ENCODE measurements at regions of chr7 and their contacts with region 1.

Region 1: GRCh38 chr7:143408686-143409561 is at the start of gene EPHA1:
- DNase-seq: peak; percentile 86 to 88
- H3K4me3 ChIP-seq: peak within 1 kb of the TSS; percentile 59
- H3K4me3 Mint-ChIP-seq: peak within 1 kb of the TSS; percentile 86
- H3K27ac Mint-ChIP-seq: peak within 1 kb of the TSS; percentile 86
- H3K4me1 ChIP-seq: peaks cover 49% of the 10 kb centered on the region
- H3K4me1 Mint-ChIP-seq: peaks cover 68% of the 10 kb centered on the region
- H3K27me3 ChIP-seq: no peaks in the 10 kb centered on the region
- H3K27me3 Mint-ChIP-seq: no peaks in the 10 kb centered on the region
- CTCF ChIP-seq: peak; percentile 68 to 87
- total RNA-seq, gene EPHA1: 66.6 and 69.2 TPM in 2 replicates

Region 2: GRCh38 chr7:143287935-143288826 is 120.7 kb before region 1 on chr7 and contains the start of gene CASP2:
- CTCF ChIA-PET with region 1: no interaction called
- POLR2A ChIA-PET with region 1: no interaction called
- intact Hi-C with region 1: no loop called
- DNase-seq: peak; percentile 99
- H3K4me3 ChIP-seq: peak within 1 kb of the TSS; percentile 73
- H3K4me3 Mint-ChIP-seq: peak within 1 kb of the TSS; percentile 81
- H3K27ac Mint-ChIP-seq: peak within 1 kb of the TSS; percentile 89
- H3K4me1 ChIP-seq: peaks cover 37% of the 10 kb centered on the region
- H3K4me1 Mint-ChIP-seq: peaks cover 47% of the 10 kb centered on the region
- H3K27me3 ChIP-seq: no peaks in the 10 kb centered on the region
- H3K27me3 Mint-ChIP-seq: no peaks in the 10 kb centered on the region
- CTCF ChIP-seq: peak; percentile 53 to 55
- total RNA-seq, gene CASP2: 51.7 and 62.0 TPM in 2 replicates

Region 3: GRCh38 chr7:143391462-143392404 is 17.2 kb before region 1 on chr7:
- CTCF ChIA-PET with region 1: interaction called, 3 read pairs
- POLR2A ChIA-PET with region 1: interaction called, 3 read pairs
- intact Hi-C with region 1: loop called (anchors 1 kb)
- DNase-seq: no peak
- H3K4me3 ChIP-seq: no peak overlapping the region
- H3K4me3 Mint-ChIP-seq: no peak overlapping the region
- H3K27ac Mint-ChIP-seq: peak overlapping the region; percentile 58
- H3K4me1 ChIP-seq: peaks cover 20% of the 10 kb centered on the region; the same call in 1 of the 2 replicates
- H3K4me1 Mint-ChIP-seq: peaks cover 15% of the 10 kb centered on the region
- H3K27me3 ChIP-seq: no peaks in the 10 kb centered on the region
- H3K27me3 Mint-ChIP-seq: no peaks in the 10 kb centered on the region
- CTCF ChIP-seq: no peak